ENCODE measurements at regions of chr18 and their contacts with region 1.

Region 1: GRCh38 chr18:32072321-32072720 is 19.4 kb upstream of the RNF138 start:
- DNase-seq: peak; percentile 30
- H3K4me3 Mint-ChIP-seq: no peak overlapping the region
- H3K27ac Mint-ChIP-seq: no peak overlapping the region
- H3K4me1 Mint-ChIP-seq: no peaks in the 10 kb centered on the region
- H3K27me3 Mint-ChIP-seq: no peaks in the 10 kb centered on the region
- CTCF ChIP-seq: peak; percentile 37

Region 2: DNA sequence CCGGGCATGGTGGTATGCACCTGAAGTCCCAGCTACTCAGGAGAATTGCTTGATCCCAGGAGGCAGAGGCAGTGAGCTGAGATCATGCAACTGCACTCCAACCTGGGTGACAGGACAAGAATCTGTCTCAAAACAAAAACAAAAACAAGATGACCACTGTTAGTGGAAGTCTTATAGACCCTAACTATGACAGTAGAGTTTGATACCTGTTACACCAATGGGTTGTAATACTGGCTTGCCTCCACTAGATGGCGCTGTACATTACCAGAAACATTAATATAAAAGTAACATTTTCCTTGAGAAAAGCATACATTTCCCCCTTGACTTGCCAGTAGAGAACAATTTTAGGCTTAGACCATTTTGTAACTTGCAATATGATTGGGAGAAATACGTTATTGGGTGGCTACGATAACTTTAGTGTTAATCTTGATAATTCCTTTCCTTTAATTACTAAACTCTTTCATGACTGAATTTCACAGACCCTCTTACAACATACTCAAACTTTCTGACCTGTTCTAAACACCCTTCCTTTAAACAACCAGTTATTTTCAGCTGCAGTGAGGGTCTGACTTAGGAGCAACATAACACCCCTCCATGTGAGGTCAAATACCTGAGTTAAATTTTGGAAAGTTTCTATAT is 331.1 kb before region 1 on chr18:
- CTCF ChIA-PET with region 1: no interaction called
- POLR2A ChIA-PET with region 1: no interaction called
- intact Hi-C with region 1: loop called (anchors 10 kb)
- DNase-seq: peak; percentile 59
- H3K4me3 Mint-ChIP-seq: no peak overlapping the region
- H3K27ac Mint-ChIP-seq: no peak overlapping the region
- H3K4me1 Mint-ChIP-seq: no peaks in the 10 kb centered on the region
- H3K27me3 Mint-ChIP-seq: no peaks in the 10 kb centered on the region
- CTCF ChIP-seq: peak; percentile 81

Region 3: GRCh38 chr18:32018331-32019250 is 53.7 kb before region 1 on chr18 and contains the start of gene RNF125:
- CTCF ChIA-PET with region 1: interaction called, 22 read pairs
- POLR2A ChIA-PET with region 1: interaction called, 21 read pairs
- intact Hi-C with region 1: loop called (anchors 2 kb)
- DNase-seq: peak; percentile 89
- H3K4me3 Mint-ChIP-seq: peak within 1 kb of the TSS; percentile 88
- H3K27ac Mint-ChIP-seq: peak within 1 kb of the TSS; percentile 27
- H3K4me1 Mint-ChIP-seq: peaks cover 11% of the 10 kb centered on the region
- H3K27me3 Mint-ChIP-seq: no peaks in the 10 kb centered on the region
- CTCF ChIP-seq: no peak
- total RNA-seq, gene RNF125: 3.5 and 6.2 TPM in 2 replicates

Region 4: DNA sequence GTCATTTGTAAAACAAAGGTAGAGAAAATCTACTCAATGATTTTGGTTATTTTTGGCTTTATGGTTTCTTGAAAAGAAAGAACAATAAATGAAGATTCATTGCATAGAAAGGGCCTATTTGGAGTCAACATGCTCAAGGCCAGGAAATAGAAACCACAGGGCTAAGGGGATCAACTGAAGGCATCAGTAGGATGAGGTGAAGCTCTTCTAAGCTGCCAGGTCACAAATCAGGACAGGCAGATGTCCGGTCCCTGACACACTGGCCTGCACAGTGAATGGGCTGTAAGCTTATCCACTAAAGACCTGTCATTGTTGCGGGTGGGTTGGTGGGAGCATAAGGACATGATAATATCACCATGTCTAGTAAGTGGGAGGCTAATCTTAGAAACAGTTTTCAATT is 12.3 kb before region 1 on chr18:
- CTCF ChIA-PET with region 1: interaction called, 16 read pairs
- POLR2A ChIA-PET with region 1: interaction called, 4 read pairs
- intact Hi-C with region 1: no loop called
- DNase-seq: no peak
- H3K4me3 Mint-ChIP-seq: no peak overlapping the region
- H3K27ac Mint-ChIP-seq: no peak overlapping the region
- H3K4me1 Mint-ChIP-seq: no peaks in the 10 kb centered on the region
- H3K27me3 Mint-ChIP-seq: no peaks in the 10 kb centered on the region
- CTCF ChIP-seq: no peak